A549 (cell line): ENCODE measurements at regions of chr2 and their contacts with region 1.

Region 1: DNA sequence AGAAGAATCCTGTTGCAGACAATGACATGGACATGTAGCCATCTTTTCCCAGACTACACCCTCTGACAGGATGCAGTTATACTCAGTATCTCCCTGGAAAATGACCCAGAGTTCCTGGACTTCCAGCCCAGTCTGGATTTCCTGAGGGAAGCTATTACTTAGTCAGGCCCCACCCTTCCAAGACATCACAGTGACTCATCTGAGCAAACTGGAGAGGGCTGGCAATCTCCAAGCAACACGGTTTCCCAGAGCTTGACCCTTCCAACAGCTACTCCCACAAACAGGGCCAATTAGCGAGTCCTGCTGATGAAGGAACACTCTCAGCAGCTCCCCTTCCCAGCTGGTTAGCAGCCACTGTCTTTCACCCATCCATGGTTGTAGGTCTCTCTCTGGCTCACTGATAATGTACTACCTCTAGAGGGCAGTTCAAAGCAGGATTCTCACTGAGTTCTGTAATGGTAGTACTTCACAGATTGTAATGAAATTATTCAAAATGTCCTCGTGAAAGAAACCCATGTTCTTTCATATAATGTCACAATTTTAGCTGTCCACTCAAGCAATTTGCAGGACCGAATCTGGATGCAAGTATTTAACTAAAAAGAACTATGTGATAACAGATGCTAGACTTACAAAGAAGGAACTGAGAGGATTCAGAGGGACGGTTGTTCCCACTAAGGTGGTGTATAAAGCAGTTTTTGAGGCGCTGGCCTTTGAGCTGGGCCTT is 110.2 kb downstream of the MDH1 start:
- DNase-seq: peak; percentile 60 to 93
- ATAC-seq: peak; percentile 98
- H3K4me3 ChIP-seq: no peak overlapping the region
- H3K27ac ChIP-seq: peak overlapping the region; percentile 66 to 80
- H3K4me1 ChIP-seq: peaks cover 20% of the 10 kb centered on the region
- CTCF ChIP-seq: peak; percentile 73
- EP300 ChIP-seq: no peak
- POLR2A ChIP-seq: no peak; the same call in 1 of the 2 replicates
- RAD21 ChIP-seq: peak; percentile 74 to 77

Region 2: DNA sequence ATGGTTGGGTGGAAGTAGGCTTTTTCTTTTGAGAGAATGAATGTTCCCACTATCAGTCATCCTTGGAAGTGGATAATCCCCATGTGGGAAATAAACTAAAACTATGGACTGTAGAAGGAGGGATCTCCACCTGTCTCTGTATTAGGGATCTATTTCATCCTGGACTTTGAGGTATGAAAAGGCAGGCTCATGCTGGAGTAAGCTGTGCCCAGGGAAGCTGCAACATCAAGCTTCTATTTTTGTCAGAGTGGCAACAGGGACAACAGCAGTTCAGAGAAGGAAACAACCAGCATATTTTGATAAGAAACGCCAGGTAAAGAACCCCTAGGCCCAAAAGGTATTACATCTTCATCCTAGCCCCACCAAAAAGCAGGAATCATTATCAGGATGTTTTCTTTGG is 11.7 kb after region 1 on chr2:
- CTCF ChIA-PET with region 1: interaction called, 12 read pairs
- POLR2A ChIA-PET with region 1: no interaction called
- DNase-seq: no peak
- ATAC-seq: no peak
- H3K4me3 ChIP-seq: no peak overlapping the region
- H3K27ac ChIP-seq: no peak overlapping the region
- H3K4me1 ChIP-seq: peaks cover 4% of the 10 kb centered on the region; the same call in 2 of the 3 replicates
- CTCF ChIP-seq: no peak
- EP300 ChIP-seq: no peak
- POLR2A ChIP-seq: no peak
- RAD21 ChIP-seq: no peak

Region 3: GRCh38 chr2:63736354-63736753 is 37.4 kb after region 1 on chr2:
- CTCF ChIA-PET with region 1: interaction called, 35 read pairs
- POLR2A ChIA-PET with region 1: interaction called, 11 read pairs
- DNase-seq: no peak
- ATAC-seq: no peak
- H3K4me3 ChIP-seq: no peak overlapping the region
- H3K27ac ChIP-seq: peak overlapping the region; percentile 78 to 83; a peak in 5 of 6 replicates
- H3K4me1 ChIP-seq: peaks cover 65% of the 10 kb centered on the region
- CTCF ChIP-seq: no peak
- EP300 ChIP-seq: no peak
- POLR2A ChIP-seq: no peak
- RAD21 ChIP-seq: no peak

Region 4: GRCh38 chr2:63790913-63791312 is 91.9 kb after region 1 on chr2:
- CTCF ChIA-PET with region 1: interaction called, 18 read pairs
- POLR2A ChIA-PET with region 1: interaction called, 4 read pairs
- DNase-seq: peak; percentile 10 to 29
- ATAC-seq: peak; percentile 81 to 90; a peak in 5 of 6 replicates
- H3K4me3 ChIP-seq: no peak overlapping the region
- H3K27ac ChIP-seq: peak overlapping the region; percentile 31 to 38; a peak in 5 of 6 replicates
- H3K4me1 ChIP-seq: peaks cover 17% of the 10 kb centered on the region; the same call in 2 of the 3 replicates
- CTCF ChIP-seq: no peak
- EP300 ChIP-seq: no peak
- POLR2A ChIP-seq: no peak
- RAD21 ChIP-seq: no peak

Region 5: DNA sequence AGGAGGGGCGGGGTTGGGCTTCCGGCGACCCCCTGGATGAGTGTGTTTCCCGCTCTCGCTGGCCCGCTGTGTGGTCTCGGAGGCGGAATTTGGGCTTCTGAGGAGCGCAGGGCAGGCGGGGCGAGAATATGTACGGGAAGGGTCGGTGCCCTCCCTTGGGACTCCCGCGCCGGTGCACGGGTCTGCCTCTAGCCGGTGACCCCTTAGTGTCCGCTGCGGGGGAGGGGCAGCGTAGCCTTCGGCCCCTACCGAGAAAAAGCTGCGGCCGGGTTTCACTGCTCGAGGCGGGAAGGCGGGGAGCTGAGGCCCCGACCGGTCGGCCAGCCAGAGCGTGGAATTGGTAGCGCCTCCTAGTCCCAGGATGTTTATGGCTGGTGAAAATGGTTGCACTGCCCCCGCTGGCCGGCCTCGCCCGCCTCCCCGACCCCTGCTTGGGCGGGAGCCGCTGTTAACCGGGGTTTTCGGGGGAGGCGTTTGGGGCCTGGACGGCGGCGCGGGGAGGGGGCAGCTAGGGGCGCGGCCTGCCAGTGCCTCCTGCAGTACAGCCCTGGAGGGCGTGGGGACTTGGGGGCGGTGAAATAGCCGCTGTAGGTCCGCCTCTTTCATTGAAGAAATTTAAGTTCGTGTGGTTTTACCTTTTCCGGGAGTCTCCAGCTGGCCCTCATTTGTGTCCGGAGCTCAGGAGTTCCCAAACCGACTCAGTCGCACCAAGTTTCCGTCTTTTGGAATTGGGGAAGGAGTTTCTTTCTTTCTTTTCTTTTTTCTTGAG is 142.5 kb after region 1 on chr2 and contains the start of gene UGP2:
- CTCF ChIA-PET with region 1: interaction called, 45 read pairs
- POLR2A ChIA-PET with region 1: interaction called, 103 read pairs
- DNase-seq: peak; percentile 75 to 95
- ATAC-seq: peak; percentile 75 to 91
- H3K4me3 ChIP-seq: peak within 1 kb of the TSS; percentile 93
- H3K27ac ChIP-seq: peak within 1 kb of the TSS; percentile 94 to 98
- H3K4me1 ChIP-seq: peaks cover 17% of the 10 kb centered on the region; the same call in 2 of the 3 replicates
- CTCF ChIP-seq: peak; percentile 35
- EP300 ChIP-seq: no peak
- POLR2A ChIP-seq: peak; percentile 60
- RAD21 ChIP-seq: peak in 1 of 2 experiments; percentile 52; a peak in 3 of 5 replicates
- polyA plus RNA-seq, gene UGP2: 136 and 162 TPM in 2 replicates

Region 6: DNA sequence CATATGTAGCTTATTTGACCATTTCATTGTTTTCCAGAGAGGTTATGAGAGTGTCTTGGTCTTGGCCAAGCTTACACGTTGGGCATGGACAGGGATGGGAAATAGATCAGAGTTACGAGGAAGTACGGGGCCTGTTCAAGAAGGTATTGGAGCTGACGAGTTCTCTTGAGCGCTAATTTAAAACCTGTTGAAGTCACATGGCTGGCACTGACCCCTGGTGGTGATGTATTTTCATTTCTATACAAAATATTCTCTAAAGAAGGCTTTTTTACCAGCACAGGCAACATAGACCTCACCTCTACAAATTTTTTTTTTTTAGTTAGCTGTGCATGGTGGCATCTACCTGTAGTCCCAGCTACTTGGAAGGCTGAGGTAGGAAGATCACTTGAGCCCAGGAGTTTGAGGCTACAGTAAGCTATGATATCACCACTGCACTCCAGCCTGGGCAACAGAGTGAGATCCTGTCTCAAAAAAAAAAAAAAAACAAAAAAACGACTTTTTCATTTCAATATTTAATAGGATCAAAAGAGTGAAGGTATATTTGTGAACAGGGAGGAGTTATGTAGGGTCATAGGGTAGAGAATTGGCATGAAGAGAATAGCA is 162.3 kb after region 1 on chr2:
- CTCF ChIA-PET with region 1: interaction called, 94 read pairs
- POLR2A ChIA-PET with region 1: interaction called, 3 read pairs
- DNase-seq: peak; percentile 32 to 77
- ATAC-seq: peak; percentile 39 to 83; a peak in 5 of 6 replicates
- H3K4me3 ChIP-seq: no peak overlapping the region
- H3K27ac ChIP-seq: no peak overlapping the region
- H3K4me1 ChIP-seq: peaks cover 29% of the 10 kb centered on the region
- CTCF ChIP-seq: peak; percentile 88
- EP300 ChIP-seq: no peak
- POLR2A ChIP-seq: no peak
- RAD21 ChIP-seq: peak; percentile 85 to 87